Dendritic cell treated with granulocyte-macrophage colony-stimulating factor and Interleukin-4, amounts not matched to agents 40 ng/mL and 50 ng/mL, for 4 days (primary cell): ENCODE measurements at regions of chr10 and their contacts with region 1.

Region 1: DNA sequence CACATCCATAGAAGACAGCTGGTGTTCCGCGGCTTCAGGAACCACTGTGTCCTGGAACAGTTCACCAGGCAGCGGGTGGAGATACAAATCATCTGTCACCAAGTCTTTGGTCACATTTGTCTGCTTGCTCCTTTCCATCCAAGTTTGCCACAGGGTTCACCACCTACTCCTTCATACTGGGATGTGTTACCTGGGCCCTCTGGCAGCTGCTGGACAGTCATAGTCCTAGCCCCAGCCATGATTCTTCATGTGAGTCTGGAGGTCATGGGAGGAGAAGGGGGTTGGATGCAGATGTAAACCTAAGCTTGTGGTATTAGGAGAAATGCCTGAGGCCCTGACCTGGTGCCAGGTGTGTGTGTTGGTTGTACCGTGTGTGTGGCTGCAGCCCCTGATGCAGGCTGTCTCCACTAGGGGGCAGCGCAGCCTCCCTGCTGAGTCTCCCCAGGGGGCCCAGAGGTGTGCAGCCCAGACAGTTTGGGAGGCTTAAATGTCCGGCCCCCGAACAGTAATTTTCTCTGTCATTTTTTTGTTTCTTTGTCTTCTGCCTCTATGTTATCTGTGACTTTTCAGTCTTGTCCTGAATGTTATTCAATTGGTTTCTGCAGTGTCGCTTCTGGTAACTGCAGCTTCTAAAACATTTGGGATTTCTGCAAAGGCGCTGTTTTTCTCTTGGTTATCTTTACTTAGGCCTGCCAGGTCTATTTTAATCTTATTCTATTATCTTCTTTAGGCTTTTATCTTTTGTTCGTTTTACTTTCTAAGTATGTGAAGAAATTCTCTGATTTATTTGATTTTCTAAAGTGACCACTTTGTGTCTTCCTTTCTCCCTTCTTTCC is 14.8 kb downstream of the NPS start:
- H3K4me3 Mint-ChIP-seq: no peak overlapping the region
- H3K27ac Mint-ChIP-seq: no peak overlapping the region
- H3K4me1 Mint-ChIP-seq: no peaks in the 10 kb centered on the region
- H3K27me3 Mint-ChIP-seq: peaks cover 6% of the 10 kb centered on the region

Region 2: DNA sequence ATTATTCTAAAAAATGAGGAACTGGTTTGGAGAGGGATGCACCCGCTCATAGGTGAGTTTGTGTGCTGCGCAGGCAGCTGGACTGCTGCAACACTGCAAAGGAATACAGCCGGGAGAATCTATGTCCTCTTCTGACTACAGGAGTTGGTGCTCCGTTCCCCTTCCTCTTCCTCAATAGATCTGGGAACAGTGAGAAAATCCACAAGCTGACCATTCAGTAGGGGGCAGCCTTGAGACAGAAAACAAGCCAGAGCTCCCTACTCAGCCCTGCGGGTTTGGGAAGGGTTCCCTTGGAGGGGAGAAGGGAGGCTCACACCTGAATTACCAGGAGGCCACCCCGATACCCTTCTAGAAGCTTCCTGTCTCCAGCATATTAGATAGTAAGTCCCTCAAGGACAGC is 85.7 kb after region 1 on chr10:
- intact Hi-C with region 1: no loop called
- H3K4me3 Mint-ChIP-seq: no peak overlapping the region
- H3K27ac Mint-ChIP-seq: no peak overlapping the region
- H3K4me1 Mint-ChIP-seq: no peaks in the 10 kb centered on the region
- H3K27me3 Mint-ChIP-seq: no peaks in the 10 kb centered on the region

Region 3: GRCh38 chr10:128000471-128001362 is 436.8 kb after region 1 on chr10:
- intact Hi-C with region 1: loop called (anchors 10 kb)
- H3K4me3 Mint-ChIP-seq: no peak overlapping the region
- H3K27ac Mint-ChIP-seq: no peak overlapping the region
- H3K4me1 Mint-ChIP-seq: peaks cover 51% of the 10 kb centered on the region
- H3K27me3 Mint-ChIP-seq: no peaks in the 10 kb centered on the region